ENCODE measurements at regions of chr3 and their contacts with region 1.

Region 1: DNA sequence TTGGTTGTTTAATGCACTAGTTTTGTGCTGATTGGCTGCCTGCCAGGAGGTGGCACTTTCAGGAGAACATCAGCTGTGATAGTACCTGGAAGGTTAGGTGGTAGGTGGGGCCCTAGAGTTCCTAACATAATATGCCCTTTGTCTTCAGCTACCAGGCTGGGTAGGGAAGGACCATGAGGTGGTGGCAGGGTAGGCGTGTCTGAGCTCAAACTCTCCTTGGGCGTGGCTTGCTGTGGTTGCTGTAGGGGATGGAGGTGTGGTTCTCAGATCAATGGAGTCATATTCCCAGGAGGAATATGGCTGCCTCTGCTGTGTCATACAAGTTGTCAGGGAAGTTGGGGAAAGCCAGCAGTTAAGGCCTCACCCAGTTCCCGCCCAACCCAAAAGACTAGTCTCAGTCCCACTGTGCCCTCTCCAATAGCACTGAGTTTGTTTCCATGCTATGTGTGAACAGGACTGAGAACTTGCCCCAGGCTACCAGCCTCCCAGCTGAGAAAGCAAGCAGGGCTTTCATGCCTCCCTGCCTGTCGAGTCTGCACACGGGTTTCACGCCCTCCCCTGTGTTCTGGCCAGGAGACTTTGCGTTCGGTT is 107.7 kb downstream of the CHCHD4 start:
- DNase-seq: peak in 1 of 2 donors; percentile 50
- H3K4me3 ChIP-seq: no peak overlapping the region
- CTCF ChIP-seq: no peak
- POLR2A ChIP-seq: no peak

Region 2: DNA sequence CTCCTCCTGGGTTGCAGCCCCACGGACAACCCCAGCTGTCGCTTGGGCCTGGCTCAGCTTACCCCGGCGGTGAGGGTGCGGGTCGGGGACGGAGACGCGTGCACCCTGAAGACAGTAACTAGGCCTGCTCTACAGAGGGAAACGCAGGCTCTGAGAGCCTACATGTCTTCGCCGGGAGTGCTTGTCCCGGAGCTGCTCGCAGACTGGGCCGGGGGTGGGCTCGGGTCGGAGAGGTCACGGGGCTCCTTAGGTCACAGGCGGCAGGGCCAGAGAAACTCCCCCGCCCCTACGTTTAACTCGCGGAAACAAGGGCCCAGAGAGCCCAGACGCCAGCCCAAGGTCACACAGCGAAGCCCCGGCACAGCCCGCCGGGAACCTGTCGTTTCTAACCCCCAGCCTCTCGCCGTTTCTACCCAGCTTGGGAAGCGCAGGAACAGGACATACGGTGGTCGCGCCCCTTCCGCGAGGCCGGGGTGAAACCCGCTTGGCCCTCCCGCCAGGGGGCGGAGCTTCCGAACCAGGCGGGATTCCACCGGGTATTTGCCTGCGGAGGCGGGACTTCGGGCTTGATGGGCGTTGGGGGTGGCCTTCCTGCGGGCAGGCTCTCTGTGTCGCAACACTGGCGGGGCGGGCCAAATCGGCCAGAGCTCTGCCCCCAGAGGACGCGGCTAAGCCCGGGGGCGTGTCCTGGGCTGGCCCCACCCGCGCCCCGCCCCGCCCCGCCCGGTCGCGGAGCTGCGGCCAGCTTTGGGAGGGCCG is 537.2 kb before region 1 on chr3 and contains the start of gene HDAC11:
- intact Hi-C with region 1: loop called (anchors 5 kb)
- DNase-seq: peak; percentile 98 to 100
- H3K4me3 ChIP-seq: peak within 1 kb of the TSS; percentile 53
- CTCF ChIP-seq: no peak
- POLR2A ChIP-seq: peak in 1 of 2 donors; percentile 75
- total RNA-seq, gene HDAC11: 20.6 to 28.3 (median 22.8) TPM

Region 3: DNA sequence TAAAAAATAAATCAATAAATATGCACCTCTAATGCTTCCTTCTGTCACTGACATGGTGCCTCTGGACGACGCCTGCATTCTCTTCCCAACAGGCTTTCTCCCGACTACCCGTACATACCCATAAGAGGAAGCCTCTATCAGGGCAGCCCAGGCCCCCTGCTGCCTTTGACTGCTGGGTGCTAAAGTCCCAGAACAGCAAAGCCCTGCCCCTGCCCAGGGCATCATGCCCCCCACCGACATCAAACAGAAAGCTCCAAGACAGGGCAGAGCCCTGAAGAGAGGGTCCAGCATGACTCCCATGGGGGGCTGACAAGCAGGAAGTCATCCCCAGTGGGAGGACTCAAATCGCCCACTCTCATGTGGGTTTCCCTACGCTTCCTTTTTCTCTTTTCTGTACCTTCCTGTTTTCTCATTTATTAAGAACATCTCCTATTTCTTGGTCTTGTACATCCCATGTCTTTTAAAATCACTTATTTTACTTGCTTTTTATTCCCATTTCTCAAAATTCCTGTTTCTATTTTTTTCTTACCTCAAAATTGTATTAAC is 138.0 kb after region 1 on chr3:
- intact Hi-C with region 1: no loop called
- DNase-seq: no peak
- H3K4me3 ChIP-seq: no peak overlapping the region
- CTCF ChIP-seq: no peak
- POLR2A ChIP-seq: no peak

Region 4: DNA sequence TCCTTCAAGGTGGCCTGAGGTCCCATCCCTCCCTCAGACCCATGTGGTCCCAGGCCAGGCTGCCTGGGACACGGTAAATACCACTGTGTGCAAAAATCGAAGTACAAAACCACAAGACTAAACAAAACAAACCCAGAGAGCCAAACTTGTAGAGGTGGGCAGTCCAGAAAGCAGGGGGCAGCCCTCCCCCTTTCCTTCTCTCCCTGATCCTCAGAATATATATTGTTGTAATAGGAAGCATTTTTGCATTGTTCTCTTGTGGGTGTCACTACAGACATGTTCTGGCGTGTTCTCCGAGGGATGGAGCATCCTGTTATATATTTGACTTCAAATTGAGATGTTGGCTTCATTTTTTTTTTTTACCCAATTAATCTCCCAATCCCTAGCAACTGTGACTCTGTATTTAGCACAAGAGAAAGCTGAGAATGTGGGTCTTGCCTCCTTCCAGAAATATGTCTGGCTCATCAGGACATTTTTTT is 471.6 kb after region 1 on chr3:
- intact Hi-C with region 1: no loop called
- DNase-seq: no peak
- H3K4me3 ChIP-seq: no peak overlapping the region
- CTCF ChIP-seq: no peak
- POLR2A ChIP-seq: no peak

Region 5: DNA sequence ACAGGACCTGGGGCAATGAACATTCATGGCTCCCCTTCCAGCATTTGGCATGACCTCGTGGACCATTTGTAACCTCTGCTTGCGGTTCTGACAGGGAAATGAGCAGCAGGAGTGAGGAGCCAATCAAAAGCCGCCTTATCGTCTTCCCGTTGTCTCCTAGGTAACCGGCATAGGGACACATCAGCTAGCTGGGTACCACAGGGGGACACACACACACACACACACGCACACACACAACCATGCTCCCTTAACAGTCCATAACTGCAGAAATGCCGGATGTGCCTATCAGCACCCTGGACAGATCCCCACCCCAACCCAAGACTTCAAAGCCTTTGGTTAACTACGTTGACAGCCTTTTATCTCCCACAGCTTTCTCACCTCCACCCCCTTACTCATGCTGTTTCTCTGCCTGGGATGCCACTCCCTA is 581.2 kb after region 1 on chr3:
- intact Hi-C with region 1: no loop called
- DNase-seq: no peak
- H3K4me3 ChIP-seq: no peak overlapping the region
- CTCF ChIP-seq: no peak
- POLR2A ChIP-seq: no peak

Measured in lower leg skin (tissue), 4 donors.